Activated CD4-positive, alpha-beta memory T cell treated with anti-CD3 and anti-CD28 coated beads, Interleukin-2, amount 10 ng/mL, durations not matched to agents 7 days and 5 days (primary cell): ENCODE measurements at regions of chr2 and their contacts with region 1.

Region 1: DNA sequence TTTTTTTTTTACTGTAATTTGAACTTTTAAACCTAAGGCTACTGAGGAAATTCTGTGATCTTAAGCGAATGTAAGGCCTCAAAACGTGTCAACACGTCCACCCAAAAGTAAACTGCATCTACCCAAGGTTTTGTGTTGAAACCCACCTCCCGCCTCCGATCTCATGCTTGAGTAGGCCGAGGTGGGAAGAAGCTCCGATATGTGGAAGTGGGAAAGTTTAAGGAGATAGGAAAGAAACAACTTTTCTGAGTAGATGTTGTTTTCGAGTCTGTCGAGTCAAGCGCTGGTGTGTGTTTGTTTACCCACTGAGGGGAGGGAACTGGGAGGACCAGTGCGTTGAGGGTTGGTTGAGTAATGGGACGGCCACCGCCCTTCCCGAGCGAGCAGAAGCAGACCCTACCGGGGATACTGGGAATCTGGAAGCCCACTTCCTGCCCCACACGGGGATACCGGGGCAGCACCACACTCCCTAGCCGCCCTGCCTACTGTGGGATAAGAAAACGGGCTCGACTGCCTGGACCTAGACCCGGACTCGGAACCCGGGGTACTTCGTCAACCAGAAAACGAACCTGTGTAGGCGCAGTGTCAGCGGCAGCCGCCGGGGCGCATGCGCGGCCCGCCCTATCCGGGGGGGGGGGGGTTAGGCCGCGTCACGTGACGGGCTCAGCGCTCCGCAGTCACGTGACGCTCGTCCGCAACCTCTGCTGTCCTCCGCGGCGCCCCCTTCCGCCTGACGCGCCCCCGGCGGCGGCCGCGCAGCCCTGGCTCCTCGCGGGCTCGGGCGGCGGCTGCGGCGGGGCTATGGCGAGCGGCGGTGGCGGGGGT is at the start of gene RETREG2:
- DNase-seq: peak; percentile 84
- H3K4me3 Mint-ChIP-seq: peak within 1 kb of the TSS; percentile 85
- H3K27ac Mint-ChIP-seq: peak within 1 kb of the TSS; percentile 99
- H3K4me1 Mint-ChIP-seq: peaks cover 72% of the 10 kb centered on the region
- H3K27me3 Mint-ChIP-seq: no peaks in the 10 kb centered on the region
- total RNA-seq, gene RETREG2: 107 to 113 TPM

Region 2: GRCh38 chr2:219104107-219105035 is 73.4 kb before region 1 on chr2:
- CTCF ChIA-PET with region 1: no interaction called
- POLR2A ChIA-PET with region 1: no interaction called
- DNase-seq: no peak
- H3K4me3 Mint-ChIP-seq: no peak overlapping the region
- H3K27ac Mint-ChIP-seq: no peak overlapping the region
- H3K4me1 Mint-ChIP-seq: peaks cover 5% of the 10 kb centered on the region
- H3K27me3 Mint-ChIP-seq: no peaks in the 10 kb centered on the region

Region 3: DNA sequence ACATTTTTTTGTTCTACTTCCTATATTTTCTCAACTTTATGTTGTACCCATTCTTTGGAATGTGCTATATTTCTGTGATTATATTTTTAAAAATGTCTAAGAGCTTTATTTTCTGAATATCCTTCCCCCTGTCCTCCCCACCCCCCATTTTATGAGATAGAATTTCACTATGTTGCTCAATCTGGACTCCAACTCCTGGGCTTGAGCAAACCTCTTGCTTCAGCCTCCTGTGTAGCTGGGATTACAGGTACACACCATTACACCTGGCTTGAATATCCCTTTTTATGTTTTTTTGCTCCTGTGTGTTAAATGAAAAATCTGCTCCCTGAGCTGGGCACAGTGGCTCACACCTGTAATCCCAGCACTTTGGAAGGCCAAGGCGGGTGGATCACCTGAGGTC is 19.6 kb after region 1 on chr2:
- CTCF ChIA-PET with region 1: interaction called, 5 read pairs
- POLR2A ChIA-PET with region 1: interaction called, 21 read pairs
- DNase-seq: no peak
- H3K4me3 Mint-ChIP-seq: no peak overlapping the region
- H3K27ac Mint-ChIP-seq: no peak overlapping the region
- H3K4me1 Mint-ChIP-seq: peaks cover 5% of the 10 kb centered on the region
- H3K27me3 Mint-ChIP-seq: peaks cover 17% of the 10 kb centered on the region

Region 4: DNA sequence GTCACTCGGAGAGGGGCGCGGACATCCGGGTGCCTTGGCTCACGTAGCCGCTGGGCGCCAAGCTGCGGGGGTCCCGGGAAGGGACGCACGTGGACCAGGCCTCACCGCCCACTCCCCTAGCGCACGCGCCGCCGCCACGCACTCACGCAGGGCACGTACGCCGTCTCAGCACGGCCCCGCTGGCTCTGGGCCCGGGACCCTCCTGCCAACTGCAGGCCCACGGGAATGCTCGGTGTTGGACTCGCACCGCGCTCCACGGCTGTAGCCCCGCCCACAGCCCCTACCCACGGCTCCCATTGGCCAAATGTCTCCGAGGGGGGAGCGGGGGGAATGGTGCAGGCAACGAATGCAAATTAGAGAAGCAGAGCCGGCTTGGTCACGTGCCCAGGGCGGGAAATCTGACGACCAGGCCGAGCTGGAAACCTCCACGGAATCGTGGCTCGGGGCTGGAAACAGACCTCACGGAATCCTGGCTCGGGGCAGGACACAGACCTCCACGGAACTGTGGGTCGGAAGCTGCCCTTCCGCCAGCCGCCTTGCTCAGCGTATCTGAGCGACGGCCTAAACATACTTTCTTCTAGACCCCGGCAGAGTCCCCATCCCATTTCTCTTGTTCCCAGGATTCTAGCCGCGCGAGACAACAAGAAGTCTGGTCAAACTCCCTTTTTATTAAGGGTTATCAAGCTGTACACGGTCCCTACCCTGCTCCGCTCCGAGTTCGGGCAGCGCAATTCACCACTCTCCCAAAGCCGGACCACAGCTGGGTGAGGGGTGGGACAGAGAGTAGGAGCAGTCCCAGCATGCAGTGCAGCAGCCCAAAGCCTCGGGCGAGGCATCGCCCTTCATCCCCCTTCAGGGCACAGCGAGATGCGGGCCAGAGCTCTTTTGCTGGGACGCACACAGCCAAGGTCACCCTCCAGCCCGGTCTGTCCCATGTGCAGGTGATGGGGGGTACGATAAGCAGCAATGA is 41.3 kb after region 1 on chr2 and contains the start of gene ABCB6:
- CTCF ChIA-PET with region 1: interaction called, 6 read pairs
- POLR2A ChIA-PET with region 1: interaction called, 27 read pairs
- DNase-seq: peak; percentile 88
- H3K4me3 Mint-ChIP-seq: peak within 1 kb of the TSS; percentile 85
- H3K27ac Mint-ChIP-seq: peak within 1 kb of the TSS; percentile 82
- H3K4me1 Mint-ChIP-seq: peaks cover 38% of the 10 kb centered on the region
- H3K27me3 Mint-ChIP-seq: no peaks in the 10 kb centered on the region
- total RNA-seq, gene ABCB6: 15.2 to 17.9 TPM

Region 5: GRCh38 chr2:219229305-219230058 is 51.7 kb after region 1 on chr2 and contains the starts of genes ANKZF1 and ATG9A:
- CTCF ChIA-PET with region 1: interaction called, 4 read pairs
- POLR2A ChIA-PET with region 1: interaction called, 24 read pairs
- DNase-seq: peak; percentile 99
- H3K4me3 Mint-ChIP-seq: peak within 1 kb of the TSS; percentile 99
- H3K27ac Mint-ChIP-seq: peak within 1 kb of the TSS; percentile 100
- H3K4me1 Mint-ChIP-seq: peaks cover 56% of the 10 kb centered on the region
- H3K27me3 Mint-ChIP-seq: no peaks in the 10 kb centered on the region
- total RNA-seq, gene ANKZF1: 121 to 122 TPM
- total RNA-seq, gene ATG9A: 58.9 to 60.7 TPM

Region 6: DNA sequence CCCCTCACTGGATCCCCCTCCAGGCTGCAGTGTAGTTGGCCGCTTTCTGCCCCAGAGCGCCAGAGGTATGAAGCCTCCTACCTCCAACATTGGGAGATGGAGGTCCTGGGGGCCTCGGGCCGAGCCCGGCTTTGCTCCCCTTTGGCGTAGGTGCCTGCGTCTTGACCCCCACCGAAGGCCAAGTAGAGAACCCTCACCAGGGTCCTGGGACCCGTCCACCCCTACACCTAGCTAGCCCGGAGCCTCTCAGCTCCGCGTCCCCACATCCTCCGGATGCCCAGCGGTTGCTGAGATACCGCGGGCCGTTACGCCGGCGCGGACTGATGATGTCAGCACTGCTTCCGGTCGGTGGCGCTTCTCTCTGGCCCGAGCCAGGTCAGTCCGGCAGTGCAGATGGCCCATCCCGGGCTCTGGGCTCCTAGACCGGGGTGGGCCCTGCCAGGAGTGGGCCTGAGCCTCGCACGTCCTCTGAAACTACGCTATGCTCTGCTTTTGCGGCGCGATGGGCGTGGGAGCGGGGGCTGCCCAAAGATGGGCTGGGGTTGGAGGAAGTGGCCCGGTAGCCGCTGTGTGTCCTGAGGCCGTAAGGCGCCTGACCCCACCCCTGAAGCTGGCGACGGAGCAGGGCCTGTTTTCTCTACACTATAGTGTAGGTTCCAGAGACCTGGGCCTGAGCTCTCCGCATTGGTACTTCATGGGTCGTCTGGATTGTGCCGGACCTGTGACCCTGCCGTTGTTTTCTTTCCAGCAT is 67.6 kb after region 1 on chr2 and contains the starts of genes GLB1L and STK16:
- CTCF ChIA-PET with region 1: interaction called, 7 read pairs
- POLR2A ChIA-PET with region 1: interaction called, 36 read pairs
- DNase-seq: peak; percentile 92
- H3K4me3 Mint-ChIP-seq: peak within 1 kb of the TSS; percentile 100
- H3K27ac Mint-ChIP-seq: peak within 1 kb of the TSS; percentile 81
- H3K4me1 Mint-ChIP-seq: peaks cover 66% of the 10 kb centered on the region
- H3K27me3 Mint-ChIP-seq: no peaks in the 10 kb centered on the region
- total RNA-seq, gene GLB1L: 6.2 to 7.3 TPM
- total RNA-seq, gene STK16: 41.6 to 42.3 TPM

Region 7: DNA sequence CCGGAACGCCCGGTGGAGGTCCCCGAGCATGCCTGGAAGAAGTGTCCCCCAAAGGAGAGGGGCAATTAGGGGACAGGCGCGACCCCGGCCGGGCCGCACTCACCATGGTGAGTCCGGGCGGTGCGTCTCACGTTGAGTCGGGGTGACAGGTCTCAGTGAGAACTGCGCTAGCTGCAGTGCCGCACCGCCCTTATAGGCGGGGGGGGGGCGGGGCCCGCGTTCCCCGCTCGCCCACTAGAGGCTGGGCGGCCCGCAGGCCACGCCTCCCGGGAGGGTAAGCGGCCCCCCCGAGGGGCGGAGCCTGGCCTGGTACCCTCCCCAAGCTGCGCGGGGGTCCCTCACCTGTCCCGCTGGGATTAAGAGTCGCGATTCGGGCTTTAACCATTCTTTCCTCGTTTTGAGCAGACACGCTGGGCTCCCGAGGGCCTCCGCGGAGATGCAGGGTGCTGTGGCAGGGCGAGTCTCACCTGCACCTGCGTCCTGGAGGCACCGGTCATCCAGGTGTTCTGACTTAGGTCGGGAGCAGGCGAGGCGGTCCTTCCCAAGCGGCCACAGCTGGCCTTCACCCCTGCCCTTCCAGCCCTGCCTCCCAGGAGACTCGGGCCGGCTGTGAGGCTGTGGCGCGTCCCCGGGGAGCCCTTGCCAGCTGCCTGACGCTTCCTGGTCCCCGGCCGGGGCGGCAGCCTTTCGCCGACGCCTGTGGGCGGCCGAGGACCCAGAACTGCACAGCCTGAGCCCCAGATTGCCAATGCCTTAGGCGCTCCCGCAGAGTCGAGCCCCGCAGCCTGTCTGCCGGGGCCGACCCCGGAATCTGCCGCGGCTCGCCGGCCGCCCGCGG is 76.2 kb after region 1 on chr2 and contains the start of gene TUBA4A:
- CTCF ChIA-PET with region 1: interaction called, 7 read pairs
- POLR2A ChIA-PET with region 1: interaction called, 66 read pairs
- DNase-seq: peak; percentile 92
- H3K4me3 Mint-ChIP-seq: peak within 1 kb of the TSS; percentile 100
- H3K27ac Mint-ChIP-seq: peak within 1 kb of the TSS; percentile 81
- H3K4me1 Mint-ChIP-seq: peaks cover 47% of the 10 kb centered on the region
- H3K27me3 Mint-ChIP-seq: peaks cover 2% of the 10 kb centered on the region
- total RNA-seq, gene TUBA4A: 313 to 344 TPM

Region 8: DNA sequence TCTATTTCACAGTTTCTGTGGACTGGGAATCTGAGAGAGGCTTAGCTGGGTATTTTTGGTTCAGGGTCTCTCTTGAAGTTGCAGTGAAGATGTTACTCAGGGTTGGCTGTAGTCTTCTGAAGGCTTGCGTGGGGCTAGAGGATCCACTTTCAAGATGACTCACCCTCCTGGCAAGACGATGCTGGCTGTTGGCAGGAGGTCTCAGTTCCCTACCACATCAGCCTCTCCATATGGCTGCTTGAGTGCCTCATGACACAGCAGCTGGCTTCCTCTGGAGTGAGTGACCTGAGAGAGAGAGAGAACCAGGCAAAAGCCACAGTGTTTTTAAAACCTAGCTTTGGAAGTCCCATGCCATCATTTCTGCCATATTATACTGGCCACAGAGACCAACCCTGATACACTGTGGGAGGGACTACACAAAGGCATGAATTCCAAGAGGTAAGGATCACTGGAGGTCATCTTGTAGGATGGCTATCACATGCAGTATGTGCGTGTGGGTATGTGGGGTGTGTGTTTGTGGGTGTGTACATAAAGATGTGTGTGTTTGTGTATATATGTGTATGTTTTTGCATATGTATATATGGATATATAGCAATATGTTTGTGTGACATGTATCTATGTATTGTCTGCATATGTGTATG is 184.9 kb after region 1 on chr2:
- CTCF ChIA-PET with region 1: no interaction called
- POLR2A ChIA-PET with region 1: no interaction called
- DNase-seq: no peak
- H3K4me3 Mint-ChIP-seq: no peak overlapping the region
- H3K27ac Mint-ChIP-seq: no peak overlapping the region
- H3K4me1 Mint-ChIP-seq: no peaks in the 10 kb centered on the region
- H3K27me3 Mint-ChIP-seq: peaks cover 23% of the 10 kb centered on the region